ENCODE measurements at regions of chr14 and their contacts with region 1.

Region 1: GRCh38 chr14:80726211-80726610 is 215.3 kb downstream of the CEP128 start:
- DNase-seq: no peak
- H3K4me3 ChIP-seq: no peak overlapping the region
- H3K27me3 ChIP-seq: no peaks in the 10 kb centered on the region
- CTCF ChIP-seq: no peak

Region 2: GRCh38 chr14:80751285-80751684 is 25.1 kb after region 1 on chr14:
- CTCF ChIA-PET with region 1: no interaction called
- POLR2A ChIA-PET with region 1: interaction called, 10 read pairs
- DNase-seq: no peak
- H3K4me3 ChIP-seq: no peak overlapping the region
- H3K27me3 ChIP-seq: no peaks in the 10 kb centered on the region
- CTCF ChIP-seq: no peak

Measured in BJ (cell line).